ENCODE measurements at regions of chr10 and their contacts with region 1.

Region 1: GRCh38 chr10:69914398-69915214 is 112.9 kb downstream of the COL13A1 start:
- DNase-seq: peak; percentile 58
- H3K4me3 ChIP-seq: no peak overlapping the region
- H3K27ac ChIP-seq: no peak overlapping the region
- H3K27me3 ChIP-seq: no peaks in the 10 kb centered on the region
- CTCF ChIP-seq: peak; percentile 97

Region 2: GRCh38 chr10:69663369-69663947 is 251.1 kb before region 1 on chr10:
- in situ Hi-C with region 1: loop called (anchors 25 kb)
- DNase-seq: no peak
- H3K4me3 ChIP-seq: no peak overlapping the region
- H3K27ac ChIP-seq: no peak overlapping the region
- H3K27me3 ChIP-seq: no peaks in the 10 kb centered on the region
- CTCF ChIP-seq: peak; percentile 4

Region 3: GRCh38 chr10:69800109-69800508 is 114.5 kb before region 1 on chr10:
- in situ Hi-C with region 1: loop called (anchors 10 kb)
- DNase-seq: peak; percentile 66
- H3K4me3 ChIP-seq: no peak overlapping the region
- H3K27ac ChIP-seq: no peak overlapping the region
- H3K27me3 ChIP-seq: no peaks in the 10 kb centered on the region
- CTCF ChIP-seq: peak; percentile 92